Activated CD4-positive, alpha-beta memory T cell treated with anti-CD3 and anti-CD28 coated beads, Interleukin-2, amount 10 ng/mL, durations not matched to agents 7 days and 5 days (primary cell): ENCODE measurements at regions of chr12 and their contacts with region 1.

Region 1: DNA sequence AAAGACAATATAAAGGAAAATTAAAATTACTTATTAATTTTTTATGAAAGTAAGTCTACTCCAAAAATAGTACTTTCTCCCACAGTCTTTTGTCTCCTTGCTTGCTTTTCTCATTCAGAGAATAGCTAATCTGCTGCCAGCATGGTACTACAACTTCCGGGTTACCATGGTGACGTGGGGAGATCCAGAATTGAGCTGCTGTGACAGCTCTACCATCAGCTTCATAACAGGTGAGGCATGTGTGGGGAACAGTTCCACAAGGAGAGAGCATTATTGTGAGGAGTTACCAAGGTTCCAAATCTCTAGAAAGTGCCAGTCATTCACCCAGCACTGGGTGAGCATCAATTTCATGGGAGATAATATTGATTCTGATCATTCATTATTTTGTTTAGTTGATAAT is 197.8 kb downstream of the PTPRO start:
- DNase-seq: no peak
- H3K4me3 Mint-ChIP-seq: no peak overlapping the region
- H3K27ac Mint-ChIP-seq: no peak overlapping the region
- H3K4me1 Mint-ChIP-seq: no peaks in the 10 kb centered on the region
- H3K27me3 Mint-ChIP-seq: peaks cover 34% of the 10 kb centered on the region

Region 2: GRCh38 chr12:15276088-15276698 is 243.9 kb before region 1 on chr12:
- CTCF ChIA-PET with region 1: interaction called, 16 read pairs
- POLR2A ChIA-PET with region 1: no interaction called
- DNase-seq: no peak
- H3K4me3 Mint-ChIP-seq: no peak overlapping the region
- H3K27ac Mint-ChIP-seq: no peak overlapping the region
- H3K4me1 Mint-ChIP-seq: peaks cover 13% of the 10 kb centered on the region
- H3K27me3 Mint-ChIP-seq: peaks cover 7% of the 10 kb centered on the region

Region 3: DNA sequence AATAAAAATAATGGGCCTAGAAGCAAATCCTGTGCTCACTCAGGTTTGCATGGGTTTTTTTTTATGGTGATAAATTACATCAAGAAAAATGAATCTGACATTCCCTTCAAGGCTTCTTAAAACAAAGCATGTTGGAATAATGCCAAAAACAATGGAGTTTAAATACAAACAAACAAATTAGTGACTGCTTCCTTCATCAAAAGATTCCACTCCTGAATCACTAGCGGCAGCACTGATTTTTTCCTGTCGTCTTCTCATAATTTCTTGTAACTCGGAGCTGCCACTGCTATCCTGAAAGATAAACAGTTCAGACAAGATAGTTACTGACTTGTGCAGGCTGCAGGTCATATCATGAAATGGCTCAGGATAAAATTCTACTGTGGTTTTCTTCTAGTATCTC is 101.1 kb after region 1 on chr12:
- CTCF ChIA-PET with region 1: no interaction called
- POLR2A ChIA-PET with region 1: no interaction called
- DNase-seq: no peak
- H3K4me3 Mint-ChIP-seq: no peak overlapping the region
- H3K27ac Mint-ChIP-seq: no peak overlapping the region
- H3K4me1 Mint-ChIP-seq: no peaks in the 10 kb centered on the region
- H3K27me3 Mint-ChIP-seq: no peaks in the 10 kb centered on the region

Region 4: DNA sequence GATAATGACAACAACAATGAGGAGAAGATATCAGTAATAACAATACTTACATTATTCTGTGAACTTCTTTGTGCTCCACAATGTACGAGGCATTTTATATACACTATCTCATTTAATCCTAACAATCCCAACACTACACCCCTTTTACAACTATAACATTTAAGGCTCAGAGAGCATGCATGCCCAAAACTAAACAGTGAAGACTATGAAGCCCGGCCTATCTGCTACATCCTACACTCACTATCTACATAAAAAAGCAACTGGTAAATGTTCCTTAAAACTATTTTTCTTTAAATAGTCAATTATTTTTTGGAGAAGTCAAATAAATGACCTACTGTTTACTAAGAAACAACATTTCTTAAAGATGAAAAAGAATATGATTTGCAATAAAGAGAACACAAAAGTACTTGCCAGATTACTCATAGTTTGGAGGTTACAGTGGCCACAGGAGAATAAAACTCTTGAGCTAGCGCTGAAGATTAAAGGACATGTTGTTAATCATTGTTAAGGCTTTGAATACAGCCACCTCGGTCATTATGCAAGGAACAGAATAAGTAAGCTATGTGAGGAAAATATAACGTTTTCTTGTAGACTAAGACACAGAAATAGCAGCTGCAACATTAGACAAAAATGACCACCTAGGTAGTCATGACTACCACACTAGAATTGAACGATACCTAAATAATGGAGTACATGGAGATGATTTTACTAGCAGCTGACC is 212.4 kb after region 1 on chr12:
- CTCF ChIA-PET with region 1: no interaction called
- POLR2A ChIA-PET with region 1: no interaction called
- DNase-seq: no peak
- H3K4me3 Mint-ChIP-seq: no peak overlapping the region
- H3K27ac Mint-ChIP-seq: no peak overlapping the region
- H3K4me1 Mint-ChIP-seq: no peaks in the 10 kb centered on the region
- H3K27me3 Mint-ChIP-seq: peaks cover 9% of the 10 kb centered on the region

Region 5: GRCh38 chr12:16238661-16239060 is 718.6 kb after region 1 on chr12:
- CTCF ChIA-PET with region 1: no interaction called
- POLR2A ChIA-PET with region 1: no interaction called
- DNase-seq: no peak
- H3K4me3 Mint-ChIP-seq: no peak overlapping the region
- H3K27ac Mint-ChIP-seq: no peak overlapping the region
- H3K4me1 Mint-ChIP-seq: no peaks in the 10 kb centered on the region
- H3K27me3 Mint-ChIP-seq: no peaks in the 10 kb centered on the region